ENCODE measurements at regions of chr18 and their contacts with region 1.

Region 1: DNA sequence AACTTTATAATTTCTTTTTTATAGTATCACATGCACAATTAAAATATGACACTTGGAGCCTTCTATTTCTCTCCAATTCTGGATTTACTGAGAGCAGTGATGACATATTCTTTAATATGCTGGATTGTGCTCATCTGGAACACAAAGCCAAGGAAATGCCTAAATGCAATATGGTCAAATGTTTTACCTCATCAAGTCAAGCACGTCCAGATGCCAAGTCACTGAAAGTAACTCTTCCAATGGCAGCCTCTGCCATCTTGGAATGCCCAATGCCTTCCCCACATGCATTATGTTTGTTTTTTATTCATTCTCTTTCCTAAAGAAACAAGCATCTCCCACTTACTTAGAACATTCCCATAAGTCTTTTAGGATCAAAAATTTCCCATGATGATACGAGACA is 189.8 kb downstream of the TMX3 start:
- DNase-seq: no peak
- H3K4me3 ChIP-seq: no peak overlapping the region
- H3K27ac ChIP-seq: no peak overlapping the region
- H3K4me1 ChIP-seq: no peaks in the 10 kb centered on the region
- H3K27me3 ChIP-seq: no peaks in the 10 kb centered on the region
- CTCF ChIP-seq: no peak
- POLR2A ChIP-seq: no peak

Region 2: DNA sequence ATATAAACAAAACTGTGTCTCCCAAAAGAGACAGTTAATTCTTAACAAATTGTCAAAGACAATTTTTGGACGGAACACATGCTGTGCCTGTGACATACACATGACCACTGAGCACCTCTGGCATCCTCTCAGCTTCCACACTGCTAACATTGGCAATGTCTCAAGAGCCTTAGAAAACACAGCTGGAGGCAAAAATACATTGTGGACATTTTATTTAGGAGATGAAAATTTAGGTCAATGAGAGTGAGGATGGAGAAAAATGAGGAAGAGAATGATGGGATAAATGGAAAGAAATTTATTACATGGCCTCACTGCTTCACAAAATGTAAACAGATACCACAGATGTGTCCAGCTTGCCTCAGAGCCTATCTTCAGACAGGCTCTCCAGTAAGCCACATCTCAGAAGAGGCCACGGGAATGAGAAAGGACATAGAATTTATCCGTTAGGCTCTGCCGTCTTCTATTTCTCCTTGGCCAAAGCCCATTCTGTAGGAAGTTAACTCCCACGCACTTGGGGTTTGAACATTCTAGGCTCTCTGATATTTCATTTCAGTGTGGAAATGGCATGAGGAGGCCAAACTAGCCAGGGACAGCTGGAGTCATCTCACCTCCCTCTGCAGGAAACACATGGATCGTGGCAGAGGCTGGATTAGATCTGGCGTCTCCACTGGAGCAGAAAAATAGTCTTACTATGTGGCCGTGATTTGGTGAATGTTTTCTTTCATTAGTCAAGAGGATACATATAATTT is 489.1 kb before region 1 on chr18:
- intact Hi-C with region 1: no loop called
- DNase-seq: no peak
- H3K4me3 ChIP-seq: no peak overlapping the region
- H3K27ac ChIP-seq: no peak overlapping the region
- H3K4me1 ChIP-seq: no peaks in the 10 kb centered on the region
- H3K27me3 ChIP-seq: no peaks in the 10 kb centered on the region
- CTCF ChIP-seq: no peak
- POLR2A ChIP-seq: no peak

Region 3: DNA sequence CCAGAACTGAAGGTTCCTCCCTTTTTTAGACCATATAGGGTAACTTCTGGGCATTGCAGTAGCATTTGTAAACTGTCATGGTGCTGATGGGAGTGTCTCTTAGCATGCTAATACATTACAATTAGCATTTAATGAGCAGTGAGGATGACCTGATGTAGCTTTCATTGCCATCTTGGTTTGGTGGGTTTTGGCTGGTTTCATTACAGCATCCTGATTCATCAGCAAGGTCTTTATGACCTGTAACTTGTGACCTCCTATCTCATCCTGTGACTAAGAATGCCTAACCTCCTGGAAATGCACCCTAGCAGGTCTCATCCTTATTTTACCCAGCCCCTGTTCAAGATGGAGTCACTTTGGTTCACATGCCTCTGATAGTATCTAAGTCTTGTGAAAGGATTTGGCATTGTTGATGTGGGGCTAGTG is 30.8 kb after region 1 on chr18:
- intact Hi-C with region 1: loop called (anchors 2 kb)
- DNase-seq: no peak
- H3K4me3 ChIP-seq: no peak overlapping the region
- H3K27ac ChIP-seq: no peak overlapping the region
- H3K4me1 ChIP-seq: no peaks in the 10 kb centered on the region
- H3K27me3 ChIP-seq: no peaks in the 10 kb centered on the region
- CTCF ChIP-seq: no peak
- POLR2A ChIP-seq: no peak

Measured in breast epithelium (tissue), 4 donors.